ENCODE measurements at regions of chr1 and their contacts with region 1.

Region 1: DNA sequence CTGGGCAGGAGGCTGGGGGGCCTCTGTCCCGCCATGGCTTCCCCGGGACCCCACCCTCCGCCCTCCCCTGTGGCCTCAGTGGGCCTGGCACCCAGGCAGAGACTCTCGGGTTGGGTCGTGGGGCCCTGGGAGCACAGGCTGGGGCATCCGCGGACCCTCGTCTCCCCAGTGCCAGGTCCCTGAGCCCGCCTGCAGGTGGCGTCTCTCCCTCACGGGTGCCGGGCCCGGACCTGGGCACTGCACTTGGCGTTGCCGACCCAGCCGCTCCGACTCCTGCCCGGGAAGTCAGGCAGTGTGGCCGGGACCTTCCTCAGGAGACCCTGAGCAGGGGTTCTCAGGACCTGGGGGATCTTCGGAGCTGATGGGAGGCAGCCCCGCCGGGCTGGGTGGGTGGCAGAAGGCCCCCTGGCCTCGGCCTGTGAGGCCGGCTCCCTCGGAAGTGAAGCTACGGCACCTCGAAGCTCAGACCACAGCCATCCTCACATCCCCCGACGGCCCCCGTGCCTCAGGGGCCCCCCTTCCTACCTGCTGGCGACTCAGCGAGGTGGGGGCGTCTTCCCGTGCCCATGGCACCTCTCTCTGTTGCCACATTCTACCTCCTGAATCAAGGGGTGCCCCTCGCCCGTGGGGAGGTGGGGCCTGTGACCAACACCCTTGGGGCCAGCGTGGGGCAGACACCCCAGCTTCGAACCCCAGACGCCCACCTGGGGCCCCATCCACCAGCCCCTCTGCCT is 6.4 kb upstream of the C1orf159 start:
- H3K4me3 Mint-ChIP-seq: peak overlapping the region; percentile 26
- H3K27ac Mint-ChIP-seq: no peak overlapping the region
- H3K4me1 Mint-ChIP-seq: peaks cover 17% of the 10 kb centered on the region
- H3K27me3 Mint-ChIP-seq: peaks cover 59% of the 10 kb centered on the region

Region 2: GRCh38 chr1:1033009-1033587 is 89.1 kb before region 1 on chr1:
- intact Hi-C with region 1: loop called (anchors 2 kb)
- H3K4me3 Mint-ChIP-seq: peak overlapping the region; percentile 69
- H3K27ac Mint-ChIP-seq: no peak overlapping the region
- H3K4me1 Mint-ChIP-seq: peaks cover 25% of the 10 kb centered on the region
- H3K27me3 Mint-ChIP-seq: peaks cover 43% of the 10 kb centered on the region

Region 3: DNA sequence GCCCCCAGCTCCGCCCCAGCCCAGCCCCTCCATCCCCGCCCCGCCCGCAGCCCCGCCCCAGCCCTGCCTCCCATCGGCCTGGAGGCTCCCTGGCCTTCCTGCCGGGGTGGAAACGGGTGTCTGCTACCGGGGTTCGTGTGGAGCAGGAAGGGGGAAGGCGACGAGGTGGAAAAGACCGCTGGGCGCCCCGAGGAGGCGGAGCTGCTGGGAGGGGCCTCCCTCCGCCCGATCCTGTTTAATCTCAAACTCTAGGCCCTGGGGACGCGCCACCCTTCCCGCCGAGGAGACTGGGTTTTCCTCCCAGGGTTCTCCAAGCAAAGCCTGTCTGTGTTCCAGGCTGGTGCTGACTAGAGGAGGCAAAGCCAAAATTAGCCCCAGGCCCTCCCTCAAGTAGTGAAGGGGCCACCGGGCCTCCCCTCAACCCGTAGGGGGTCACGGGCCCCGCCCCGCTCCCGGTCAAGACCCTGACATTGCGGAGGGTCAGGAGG is 35.2 kb after region 1 on chr1:
- intact Hi-C with region 1: no loop called
- H3K4me3 Mint-ChIP-seq: peak overlapping the region; percentile 73
- H3K27ac Mint-ChIP-seq: peak overlapping the region; percentile 86
- H3K4me1 Mint-ChIP-seq: no peaks in the 10 kb centered on the region
- H3K27me3 Mint-ChIP-seq: peaks cover 6% of the 10 kb centered on the region

Region 4: GRCh38 chr1:1250786-1251284 is 128.6 kb after region 1 on chr1:
- intact Hi-C with region 1: loop called (anchors 1 kb)
- H3K4me3 Mint-ChIP-seq: no peak overlapping the region
- H3K27ac Mint-ChIP-seq: no peak overlapping the region
- H3K4me1 Mint-ChIP-seq: peaks cover 7% of the 10 kb centered on the region
- H3K27me3 Mint-ChIP-seq: peaks cover 25% of the 10 kb centered on the region